Calu3 (cell line): ENCODE measurements at regions of chr7 and their contacts with region 1.

Region 1: GRCh38 chr7:142782922-142783900 is 12.4 kb downstream of the PRSS2 start:
- DNase-seq: peak; percentile 89
- H3K4me3 Mint-ChIP-seq: peak overlapping the region; percentile 64
- H3K27ac Mint-ChIP-seq: no peak overlapping the region
- H3K4me1 Mint-ChIP-seq: peaks cover 12% of the 10 kb centered on the region
- H3K27me3 Mint-ChIP-seq: peaks cover 37% of the 10 kb centered on the region
- CTCF ChIP-seq: peak; percentile 95

Region 2: DNA sequence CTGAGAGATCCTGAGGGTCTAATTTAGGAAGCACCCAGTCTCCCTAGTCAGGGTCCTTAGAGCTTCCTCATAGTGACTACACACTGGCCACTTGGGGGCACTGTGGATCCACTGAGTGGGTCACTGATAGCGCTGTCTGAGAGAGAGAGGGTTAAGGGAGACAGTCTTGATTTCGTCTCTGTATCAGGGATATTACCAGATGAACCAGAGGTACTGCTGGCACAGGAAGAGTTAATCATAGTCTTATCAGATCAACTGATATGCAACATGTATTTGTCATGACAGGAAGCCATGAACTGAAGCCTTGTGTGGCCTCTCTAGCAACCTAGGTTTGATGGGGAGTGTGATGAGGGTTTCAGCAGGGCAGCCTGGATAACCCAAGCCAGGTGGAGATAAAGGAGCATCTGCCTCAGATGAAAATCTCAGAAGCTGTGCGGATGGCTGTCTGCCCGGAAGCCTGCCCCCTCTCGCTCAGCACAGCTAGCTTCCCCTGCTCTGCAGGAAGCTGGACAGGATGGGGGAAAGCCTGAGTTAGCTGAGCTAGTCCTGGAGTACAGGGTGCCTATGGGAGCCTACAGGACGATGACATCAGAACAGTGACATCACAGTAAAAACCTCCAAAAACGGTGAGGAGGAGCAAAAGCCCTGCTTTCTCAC is 248.0 kb before region 1 on chr7:
- CTCF ChIA-PET with region 1: interaction called, 25 read pairs
- intact Hi-C with region 1: loop called (anchors 1 kb)
- DNase-seq: peak; percentile 82
- H3K4me3 Mint-ChIP-seq: no peak overlapping the region
- H3K27ac Mint-ChIP-seq: no peak overlapping the region
- H3K4me1 Mint-ChIP-seq: peaks cover 15% of the 10 kb centered on the region
- H3K27me3 Mint-ChIP-seq: peaks cover 12% of the 10 kb centered on the region
- CTCF ChIP-seq: peak; percentile 81

Region 3: GRCh38 chr7:142632291-142633134 is 150.7 kb before region 1 on chr7:
- CTCF ChIA-PET with region 1: interaction called, 63 read pairs
- intact Hi-C with region 1: loop called (anchors 1 kb)
- DNase-seq: peak; percentile 70
- H3K4me3 Mint-ChIP-seq: no peak overlapping the region
- H3K27ac Mint-ChIP-seq: no peak overlapping the region
- H3K4me1 Mint-ChIP-seq: no peaks in the 10 kb centered on the region
- H3K27me3 Mint-ChIP-seq: peaks cover 56% of the 10 kb centered on the region
- CTCF ChIP-seq: peak; percentile 39

Region 4: GRCh38 chr7:142689439-142690120 is 93.6 kb before region 1 on chr7:
- CTCF ChIA-PET with region 1: interaction called, 11 read pairs
- intact Hi-C with region 1: loop called (anchors 1 kb)
- DNase-seq: no peak
- H3K4me3 Mint-ChIP-seq: no peak overlapping the region
- H3K27ac Mint-ChIP-seq: no peak overlapping the region
- H3K4me1 Mint-ChIP-seq: peaks cover 8% of the 10 kb centered on the region
- H3K27me3 Mint-ChIP-seq: peaks cover 25% of the 10 kb centered on the region
- CTCF ChIP-seq: no peak

Region 5: DNA sequence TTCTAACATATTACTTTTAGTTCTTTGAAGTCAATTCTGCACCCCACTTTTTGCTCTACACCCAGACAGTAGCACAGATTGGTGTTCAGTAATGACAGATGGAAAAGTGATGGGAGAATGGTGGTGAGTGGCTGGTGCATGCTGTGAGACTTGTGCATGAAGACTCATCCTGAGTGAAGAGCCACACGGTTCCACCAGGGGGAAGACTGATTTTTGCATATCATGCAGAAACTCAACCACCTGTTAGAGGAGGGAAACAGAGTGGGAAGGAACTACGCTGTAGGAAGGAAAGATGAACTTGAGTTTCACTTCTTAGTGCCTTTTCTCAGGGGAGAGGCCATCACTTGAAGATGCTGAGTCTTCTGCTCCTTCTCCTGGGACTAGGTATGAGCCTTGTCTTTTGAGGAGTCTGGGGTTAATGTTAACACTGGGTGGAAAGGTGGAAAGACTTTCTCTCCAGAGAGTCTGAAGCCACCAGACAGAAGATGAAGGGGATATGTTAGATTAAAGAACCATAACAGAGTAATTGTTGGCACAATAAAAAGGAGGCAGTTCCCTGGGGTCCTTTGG is 43.2 kb before region 1 on chr7:
- CTCF ChIA-PET with region 1: interaction called, 7 read pairs
- intact Hi-C with region 1: loop called (anchors 1 kb)
- DNase-seq: no peak
- H3K4me3 Mint-ChIP-seq: no peak overlapping the region
- H3K27ac Mint-ChIP-seq: no peak overlapping the region
- H3K4me1 Mint-ChIP-seq: no peaks in the 10 kb centered on the region
- H3K27me3 Mint-ChIP-seq: peaks cover 44% of the 10 kb centered on the region
- CTCF ChIP-seq: no peak

Region 6: DNA sequence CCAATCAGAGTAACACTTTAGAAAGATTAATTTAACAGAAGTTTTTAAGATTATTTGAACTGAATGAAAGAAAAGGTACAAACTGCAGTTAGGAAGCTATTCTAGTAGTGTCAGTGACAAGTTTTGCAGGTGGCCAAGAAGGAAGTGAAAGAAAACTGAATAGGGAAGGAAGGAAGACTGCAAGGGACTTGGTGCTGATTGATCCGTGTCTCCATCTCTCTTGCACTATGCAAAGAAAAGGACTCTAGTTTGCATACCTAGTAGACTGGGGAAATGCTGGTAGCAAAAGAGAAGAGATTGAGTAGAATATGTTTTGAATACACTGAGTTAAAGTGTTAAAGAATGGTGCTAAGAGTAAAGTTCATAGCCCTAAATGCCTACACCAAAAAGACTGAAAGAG is 301.9 kb after region 1 on chr7:
- CTCF ChIA-PET with region 1: no interaction called
- intact Hi-C with region 1: no loop called
- DNase-seq: no peak
- H3K4me3 Mint-ChIP-seq: no peak overlapping the region
- H3K27ac Mint-ChIP-seq: no peak overlapping the region
- H3K4me1 Mint-ChIP-seq: no peaks in the 10 kb centered on the region
- H3K27me3 Mint-ChIP-seq: peaks cover 42% of the 10 kb centered on the region
- CTCF ChIP-seq: no peak